ENCODE measurements at regions of chr5 and their contacts with region 1.

Region 1: DNA sequence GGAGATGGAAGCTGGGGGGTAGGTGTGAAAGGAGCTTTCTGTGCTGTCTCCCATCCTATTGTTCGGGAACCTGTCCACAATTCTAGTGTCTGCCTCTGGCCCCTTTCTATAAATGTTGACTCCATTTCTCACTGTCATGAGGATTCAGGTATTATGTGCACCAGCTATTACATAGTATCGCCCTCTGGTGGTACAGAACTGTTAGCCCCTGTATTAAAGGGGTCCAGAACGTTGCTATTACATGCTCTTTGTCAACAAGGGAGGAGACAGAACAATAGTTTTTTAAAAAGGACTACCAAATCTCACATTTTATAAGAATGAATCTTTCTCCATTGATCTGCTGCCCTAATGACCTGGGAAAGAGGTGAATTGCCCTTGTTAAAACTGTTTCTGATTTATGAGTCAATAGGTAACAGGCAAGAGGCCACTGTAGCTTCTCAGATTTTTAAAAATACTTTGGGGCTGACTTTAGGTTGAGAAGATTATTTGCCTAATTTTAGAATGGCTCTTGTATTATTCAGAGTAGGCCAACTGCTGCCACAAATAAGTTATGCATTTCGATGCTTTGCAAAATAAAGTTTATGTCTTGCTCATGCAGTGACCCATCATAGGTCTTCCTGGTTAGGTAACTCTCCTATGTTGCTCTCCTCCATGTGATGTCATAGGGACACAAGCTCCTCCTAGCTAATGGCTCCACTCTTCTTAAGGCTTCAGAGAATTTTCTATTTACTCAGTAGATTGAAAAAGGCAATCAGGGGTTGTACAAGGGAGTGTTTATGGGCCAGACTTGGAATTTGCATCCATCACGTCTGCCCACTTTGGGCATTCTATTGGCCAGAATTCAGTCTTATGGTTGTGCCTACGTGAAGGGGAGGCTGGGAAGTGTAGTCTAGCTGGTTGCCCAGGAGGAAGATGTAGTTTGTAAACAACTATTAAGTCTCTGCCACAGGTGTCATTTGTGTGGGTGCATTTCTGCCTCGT is 20.8 kb downstream of the DCANP1 start:
- DNase-seq: peak; percentile 82
- H3K4me3 Mint-ChIP-seq: no peak overlapping the region
- H3K27ac Mint-ChIP-seq: no peak overlapping the region
- H3K4me1 Mint-ChIP-seq: no peaks in the 10 kb centered on the region
- H3K27me3 Mint-ChIP-seq: peaks cover 9% of the 10 kb centered on the region
- CTCF ChIP-seq: peak; percentile 81

Region 2: DNA sequence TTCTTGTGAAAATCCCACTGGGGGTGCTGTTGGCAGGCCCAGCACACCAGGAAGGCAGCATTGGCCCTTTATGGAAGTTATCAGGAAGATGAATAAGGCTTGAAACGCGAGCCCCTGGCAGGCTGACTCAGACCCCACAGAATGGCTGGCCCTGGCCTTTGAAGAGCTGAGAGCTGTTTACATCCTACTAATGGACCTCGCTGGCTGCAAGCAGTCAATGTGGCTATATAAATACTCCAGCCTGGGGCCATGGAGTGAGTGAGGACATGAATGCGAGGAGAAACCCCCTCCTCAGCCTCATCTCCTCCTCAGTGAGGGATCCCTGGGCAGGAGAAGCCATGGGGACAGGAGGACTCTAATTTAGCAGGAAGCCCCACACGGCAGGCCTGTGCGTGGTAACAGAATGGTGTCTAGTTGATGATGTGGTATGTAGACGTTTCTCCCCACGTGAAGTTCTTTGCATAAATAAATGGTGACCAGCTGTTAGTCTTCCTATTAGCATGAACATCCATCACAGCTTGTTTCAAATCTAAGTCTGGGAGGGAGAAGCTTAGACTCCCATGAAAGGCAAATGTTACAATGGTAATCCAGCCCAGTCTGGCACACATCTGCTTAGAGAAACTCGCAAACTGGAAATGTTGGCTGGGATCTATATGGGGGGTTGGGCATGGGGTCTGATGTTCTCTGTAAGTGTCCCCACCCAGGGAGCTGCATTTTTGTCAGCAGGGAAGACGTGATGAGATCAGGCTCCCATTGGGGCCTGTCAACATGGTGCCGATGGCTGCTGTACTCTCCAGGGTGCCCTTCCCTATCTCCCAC is 217.3 kb before region 1 on chr5:
- CTCF ChIA-PET with region 1: no interaction called
- POLR2A ChIA-PET with region 1: no interaction called
- intact Hi-C with region 1: loop called (anchors 5 kb)
- DNase-seq: peak; percentile 90
- H3K4me3 Mint-ChIP-seq: no peak overlapping the region
- H3K27ac Mint-ChIP-seq: peak overlapping the region; percentile 8
- H3K4me1 Mint-ChIP-seq: peaks cover 14% of the 10 kb centered on the region
- H3K27me3 Mint-ChIP-seq: no peaks in the 10 kb centered on the region
- CTCF ChIP-seq: no peak

Region 3: DNA sequence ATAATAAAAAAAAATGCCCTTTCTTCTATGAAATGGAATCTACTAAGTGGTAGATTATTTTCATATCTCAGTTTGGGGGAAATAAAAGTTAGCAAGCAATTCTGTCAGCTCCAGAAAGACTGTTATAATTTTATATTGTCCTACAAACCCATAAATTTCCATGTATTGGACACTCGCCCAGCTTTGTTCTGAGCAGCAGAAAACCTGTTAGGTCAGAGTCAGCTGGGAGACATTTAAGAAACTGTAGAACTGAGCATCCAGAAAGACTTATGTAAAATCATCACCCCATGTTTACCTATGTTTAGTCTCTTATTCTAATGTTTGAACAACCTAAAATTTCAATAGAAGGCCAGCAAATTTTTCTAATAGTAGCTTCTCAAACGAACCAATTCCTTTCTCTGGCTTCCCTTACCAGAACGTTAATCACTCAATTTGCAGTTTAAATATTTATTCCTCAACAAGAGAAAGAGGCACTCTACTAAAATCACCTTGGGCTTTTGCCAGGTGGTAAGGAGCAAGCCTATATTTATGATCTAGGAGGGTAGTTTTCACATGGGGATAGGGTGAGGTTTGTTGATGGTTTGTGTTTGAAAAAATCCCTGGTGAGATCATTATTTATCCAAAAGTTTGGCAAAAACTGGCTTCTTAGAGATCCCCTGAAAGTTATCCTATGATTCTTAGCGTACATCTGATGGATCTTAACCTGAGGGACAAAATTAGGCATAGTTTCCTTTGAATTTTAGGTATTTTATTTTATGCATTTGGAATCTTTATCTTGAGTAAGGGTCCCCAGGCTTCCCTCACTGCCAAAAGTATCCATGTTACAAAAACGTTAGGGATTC is 61.8 kb before region 1 on chr5:
- CTCF ChIA-PET with region 1: interaction called, 7 read pairs
- POLR2A ChIA-PET with region 1: no interaction called
- intact Hi-C with region 1: loop called (anchors 10 kb)
- DNase-seq: no peak
- H3K4me3 Mint-ChIP-seq: no peak overlapping the region
- H3K27ac Mint-ChIP-seq: peak overlapping the region; percentile 61
- H3K4me1 Mint-ChIP-seq: peaks cover 5% of the 10 kb centered on the region
- H3K27me3 Mint-ChIP-seq: no peaks in the 10 kb centered on the region
- CTCF ChIP-seq: no peak

Region 4: DNA sequence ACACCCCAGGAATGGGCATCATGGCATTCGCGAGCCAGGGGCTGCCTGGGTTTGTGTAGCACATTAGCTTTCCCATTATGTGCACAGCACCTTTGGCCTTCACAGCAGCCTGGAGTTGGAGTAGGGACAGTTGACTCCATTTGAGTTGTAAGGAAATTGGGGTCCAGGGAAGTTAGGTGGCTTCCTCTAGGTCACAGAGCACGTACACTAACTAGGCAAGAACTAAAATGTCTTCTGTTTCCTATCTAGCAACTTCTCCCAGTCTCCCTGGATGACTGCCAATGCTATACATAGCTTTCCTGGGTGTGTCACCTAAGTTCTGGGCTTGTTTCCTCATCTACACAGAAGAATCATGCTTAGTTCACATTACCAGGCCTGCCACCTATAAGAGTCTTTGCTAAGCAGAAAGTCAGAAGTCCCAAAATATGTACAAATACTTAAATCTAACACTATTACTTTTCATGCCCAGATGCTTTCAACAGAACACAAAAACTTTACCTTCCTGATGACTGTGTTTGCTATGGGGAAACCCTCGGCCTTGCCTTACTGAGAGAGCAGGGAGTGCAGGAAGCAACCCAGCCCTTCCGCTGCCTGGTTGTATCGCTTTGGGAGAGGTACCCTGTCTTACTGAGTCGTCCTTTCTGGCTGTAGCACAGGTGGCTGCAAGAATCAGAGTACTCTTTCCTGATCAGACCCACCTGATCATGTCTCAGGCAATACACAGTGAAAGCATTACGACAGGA is 39.3 kb before region 1 on chr5:
- CTCF ChIA-PET with region 1: interaction called, 44 read pairs
- POLR2A ChIA-PET with region 1: interaction called, 3 read pairs
- intact Hi-C with region 1: loop called (anchors 5 kb)
- DNase-seq: peak; percentile 100
- H3K4me3 Mint-ChIP-seq: peak overlapping the region; percentile 46
- H3K27ac Mint-ChIP-seq: peak overlapping the region; percentile 89
- H3K4me1 Mint-ChIP-seq: peaks cover 56% of the 10 kb centered on the region
- H3K27me3 Mint-ChIP-seq: no peaks in the 10 kb centered on the region
- CTCF ChIP-seq: no peak

Region 5: GRCh38 chr5:135398853-135399523 is 27.4 kb before region 1 on chr5 and contains the start of gene MACROH2A1:
- CTCF ChIA-PET with region 1: interaction called, 27 read pairs
- POLR2A ChIA-PET with region 1: interaction called, 10 read pairs
- intact Hi-C with region 1: no loop called
- DNase-seq: peak; percentile 91
- H3K4me3 Mint-ChIP-seq: peak within 1 kb of the TSS; percentile 83
- H3K27ac Mint-ChIP-seq: peak within 1 kb of the TSS; percentile 92
- H3K4me1 Mint-ChIP-seq: peaks cover 39% of the 10 kb centered on the region
- H3K27me3 Mint-ChIP-seq: no peaks in the 10 kb centered on the region
- CTCF ChIP-seq: no peak
- total RNA-seq, gene MACROH2A1: 266 and 306 TPM in 2 replicates

Region 6: GRCh38 chr5:135437796-135438560 is 11.6 kb after region 1 on chr5:
- CTCF ChIA-PET with region 1: interaction called, 60 read pairs
- POLR2A ChIA-PET with region 1: interaction called, 6 read pairs
- intact Hi-C with region 1: no loop called
- DNase-seq: peak; percentile 74
- H3K4me3 Mint-ChIP-seq: no peak overlapping the region
- H3K27ac Mint-ChIP-seq: no peak overlapping the region
- H3K4me1 Mint-ChIP-seq: peaks cover 10% of the 10 kb centered on the region
- H3K27me3 Mint-ChIP-seq: no peaks in the 10 kb centered on the region
- CTCF ChIP-seq: no peak